ENCODE measurements at regions of chr11 and their contacts with region 1.

Region 1: GRCh38 chr11:26753723-26754504 is 32.1 kb upstream of the SLC5A12 start:
- DNase-seq: peak; percentile 75
- H3K4me3 ChIP-seq: no peak overlapping the region
- H3K27ac ChIP-seq: peak overlapping the region in 1 of 4 donors; percentile 11
- H3K4me1 ChIP-seq: peaks cover 0 to 30% (median 16%) of the 10 kb centered on the region in 4 donors
- H3K27me3 ChIP-seq: no peaks in the 10 kb centered on the region
- CTCF ChIP-seq: peak; percentile 70 to 81 (median 76)
- EP300 ChIP-seq: no peak
- POLR2A ChIP-seq: no peak

Region 2: GRCh38 chr11:26947379-26947844 is 193.5 kb after region 1 on chr11:
- intact Hi-C with region 1: loop called (anchors 5 kb)
- DNase-seq: peak; percentile 88
- H3K4me3 ChIP-seq: no peak overlapping the region
- H3K27ac ChIP-seq: peak overlapping the region; percentile 53 to 78 (median 70)
- H3K4me1 ChIP-seq: peaks cover 0 to 60% (median 37%) of the 10 kb centered on the region in 4 donors
- H3K27me3 ChIP-seq: no peaks in the 10 kb centered on the region
- CTCF ChIP-seq: no peak
- EP300 ChIP-seq: peak in 2 of 4 donors; percentile 42 to 68
- POLR2A ChIP-seq: no peak

Region 3: GRCh38 chr11:26993965-26994457 is 240.1 kb after region 1 on chr11 and contains the start of gene FIBIN:
- intact Hi-C with region 1: loop called (anchors 5 kb)
- DNase-seq: peak; percentile 73
- H3K4me3 ChIP-seq: peak within 1 kb of the TSS; percentile 62 to 81 (median 67)
- H3K27ac ChIP-seq: peak within 1 kb of the TSS; percentile 87 to 89 (median 88)
- H3K4me1 ChIP-seq: peaks cover 3 to 56% (median 30%) of the 10 kb centered on the region in 4 donors
- H3K27me3 ChIP-seq: no peaks in the 10 kb centered on the region
- CTCF ChIP-seq: peak in 1 of 4 experiments; percentile 20
- EP300 ChIP-seq: no peak
- POLR2A ChIP-seq: peak; percentile 25 to 40
- total RNA-seq, gene FIBIN: 29.1 to 54.6 (median 34.1) TPM

Region 4: GRCh38 chr11:27124514-27125264 is 370.8 kb after region 1 on chr11:
- intact Hi-C with region 1: loop called (anchors 10 kb)
- DNase-seq: no peak
- H3K4me3 ChIP-seq: no peak overlapping the region
- H3K27ac ChIP-seq: no peak overlapping the region
- H3K4me1 ChIP-seq: no peaks in the 10 kb centered on the region
- H3K27me3 ChIP-seq: no peaks in the 10 kb centered on the region
- CTCF ChIP-seq: peak in 1 of 4 experiments; percentile 20
- EP300 ChIP-seq: no peak
- POLR2A ChIP-seq: no peak

Region 5: GRCh38 chr11:27158722-27159679 is 405.1 kb after region 1 on chr11:
- intact Hi-C with region 1: loop called (anchors 1 kb)
- DNase-seq: peak; percentile 77
- H3K4me3 ChIP-seq: no peak overlapping the region
- H3K27ac ChIP-seq: peak overlapping the region in 1 of 4 donors; percentile 34
- H3K4me1 ChIP-seq: peaks cover 0 to 12% (median 0%) of the 10 kb centered on the region in 4 donors
- H3K27me3 ChIP-seq: no peaks in the 10 kb centered on the region
- CTCF ChIP-seq: peak; percentile 73 to 86 (median 78)
- EP300 ChIP-seq: no peak
- POLR2A ChIP-seq: no peak

Region 6: GRCh38 chr11:27497284-27497866 is 743.5 kb after region 1 on chr11:
- intact Hi-C with region 1: loop called (anchors 5 kb)
- DNase-seq: no peak
- H3K4me3 ChIP-seq: no peak overlapping the region
- H3K27ac ChIP-seq: peak overlapping the region in 2 of 4 donors; percentile 38 to 44
- H3K4me1 ChIP-seq: peaks cover 0 to 34% (median 25%) of the 10 kb centered on the region in 4 donors
- H3K27me3 ChIP-seq: no peaks in the 10 kb centered on the region
- CTCF ChIP-seq: peak in 1 of 4 experiments; percentile 48
- EP300 ChIP-seq: no peak
- POLR2A ChIP-seq: no peak